Breast epithelium (tissue), 4 donors: ENCODE measurements at regions of chr3 and their contacts with region 1.

Region 1: DNA sequence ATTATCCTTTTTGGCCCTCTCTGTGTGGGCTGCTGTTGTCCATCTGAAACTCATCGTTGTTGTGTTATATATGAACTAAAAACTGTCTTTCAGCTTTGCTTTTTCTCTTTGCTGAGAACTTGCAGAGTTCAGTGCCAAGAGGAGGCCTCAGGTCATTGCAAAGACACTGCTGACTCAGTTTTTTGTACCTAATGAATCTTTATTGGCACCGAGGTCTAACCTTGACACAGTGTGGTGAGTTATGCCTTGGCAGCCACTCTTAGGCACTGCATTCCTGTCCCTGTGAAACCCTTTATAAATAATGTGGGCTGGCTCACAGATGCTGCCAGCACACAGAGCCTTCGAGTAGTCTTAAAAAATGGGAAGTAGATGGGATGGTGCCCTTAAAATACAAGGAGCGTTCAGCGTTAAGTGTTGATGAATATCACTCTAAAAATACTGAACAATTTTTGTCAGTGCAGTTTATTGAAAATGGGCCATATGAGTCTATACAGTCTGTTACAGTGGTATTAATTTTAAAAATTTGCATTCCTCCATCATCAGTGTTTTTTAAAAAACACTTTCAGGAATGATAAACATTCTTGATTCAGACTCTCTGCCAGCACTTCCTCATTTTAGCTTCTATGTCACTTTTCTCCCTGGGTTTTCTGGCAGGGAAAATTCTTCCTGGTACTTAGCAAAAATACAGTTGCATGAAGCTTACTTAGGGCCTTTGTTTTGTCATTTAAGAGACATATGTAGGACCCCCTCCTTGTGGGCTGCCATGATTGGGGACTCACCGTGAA is 234.1 kb downstream of the CACNA2D3 start:
- DNase-seq: peak in 1 of 2 donors; percentile 63
- H3K4me3 ChIP-seq: no peak overlapping the region
- H3K27ac ChIP-seq: no peak overlapping the region
- H3K4me1 ChIP-seq: peaks cover 0 to 7% of the 10 kb centered on the region in 2 donors
- H3K27me3 ChIP-seq: no peaks in the 10 kb centered on the region
- CTCF ChIP-seq: no peak
- POLR2A ChIP-seq: no peak

Region 2: GRCh38 chr3:53941956-53942355 is 414.5 kb before region 1 on chr3:
- intact Hi-C with region 1: no loop called
- DNase-seq: no peak
- H3K4me3 ChIP-seq: no peak overlapping the region
- H3K27ac ChIP-seq: no peak overlapping the region
- H3K4me1 ChIP-seq: no peaks in the 10 kb centered on the region
- H3K27me3 ChIP-seq: no peaks in the 10 kb centered on the region
- CTCF ChIP-seq: no peak
- POLR2A ChIP-seq: no peak

Region 3: GRCh38 chr3:54339608-54340007 is 16.8 kb before region 1 on chr3:
- intact Hi-C with region 1: loop called (anchors 1 kb)
- DNase-seq: no peak
- H3K4me3 ChIP-seq: no peak overlapping the region
- H3K27ac ChIP-seq: no peak overlapping the region
- H3K4me1 ChIP-seq: no peaks in the 10 kb centered on the region
- H3K27me3 ChIP-seq: no peaks in the 10 kb centered on the region
- CTCF ChIP-seq: no peak
- POLR2A ChIP-seq: no peak

Region 4: GRCh38 chr3:55607844-55608243 is 1251.4 kb after region 1 on chr3:
- intact Hi-C with region 1: loop called (anchors 5 kb)
- DNase-seq: no peak
- H3K4me3 ChIP-seq: no peak overlapping the region
- H3K27ac ChIP-seq: no peak overlapping the region
- H3K4me1 ChIP-seq: no peaks in the 10 kb centered on the region
- H3K27me3 ChIP-seq: no peaks in the 10 kb centered on the region
- CTCF ChIP-seq: no peak
- POLR2A ChIP-seq: no peak